Activated CD4-positive, alpha-beta T cell treated with anti-CD3 and anti-CD28 coated beads, Interleukin-2, amount 10 ng/mL, durations not matched to agents 24 days and 14 days (primary cell): ENCODE measurements at regions of chr16 and their contacts with region 1.

Region 1: DNA sequence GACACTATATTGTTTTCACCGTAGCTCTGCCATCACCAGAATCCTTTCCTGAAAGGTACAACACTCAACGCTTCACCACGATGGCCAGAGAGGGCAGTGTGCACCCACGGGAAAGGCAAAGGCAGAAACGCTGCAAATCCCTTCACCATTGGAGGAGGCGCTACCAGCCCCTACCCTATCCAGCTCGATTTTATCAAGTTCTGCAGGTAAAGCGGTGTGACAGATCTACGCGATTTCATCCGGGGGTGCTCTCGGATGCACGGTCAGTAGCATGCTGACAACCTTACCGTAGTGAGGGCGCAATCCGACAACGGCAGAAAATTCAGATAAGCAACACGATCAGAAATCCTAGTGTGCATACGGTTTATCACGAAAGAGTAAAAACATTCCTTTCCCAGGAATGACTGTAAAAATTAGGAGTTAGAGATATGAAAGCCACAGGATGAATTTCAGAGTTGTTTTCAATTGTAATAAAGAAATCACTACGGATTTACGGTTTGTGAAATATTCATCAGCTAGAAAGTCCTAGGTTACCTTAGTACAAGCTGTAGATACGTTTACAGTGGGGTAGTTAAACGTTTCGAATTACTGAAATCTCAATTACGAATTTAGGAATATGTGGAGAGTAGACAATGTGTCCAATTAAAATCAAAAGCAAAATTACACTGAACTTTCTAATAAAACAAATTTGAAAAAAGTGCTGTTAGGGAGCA is 1.8 kb downstream of the NETO2 start:
- DNase-seq: peak; percentile 96
- H3K4me3 Mint-ChIP-seq: peak overlapping the region; percentile 84
- H3K27ac Mint-ChIP-seq: peak overlapping the region; percentile 51
- H3K4me1 Mint-ChIP-seq: peaks cover 34% of the 10 kb centered on the region
- H3K27me3 Mint-ChIP-seq: peaks cover 18% of the 10 kb centered on the region

Region 2: GRCh38 chr16:46947900-46948547 is 193.9 kb before region 1 on chr16:
- intact Hi-C with region 1: loop called (anchors 2 kb)
- DNase-seq: peak; percentile 82
- H3K4me3 Mint-ChIP-seq: no peak overlapping the region
- H3K27ac Mint-ChIP-seq: no peak overlapping the region
- H3K4me1 Mint-ChIP-seq: peaks cover 11% of the 10 kb centered on the region
- H3K27me3 Mint-ChIP-seq: no peaks in the 10 kb centered on the region

Region 3: DNA sequence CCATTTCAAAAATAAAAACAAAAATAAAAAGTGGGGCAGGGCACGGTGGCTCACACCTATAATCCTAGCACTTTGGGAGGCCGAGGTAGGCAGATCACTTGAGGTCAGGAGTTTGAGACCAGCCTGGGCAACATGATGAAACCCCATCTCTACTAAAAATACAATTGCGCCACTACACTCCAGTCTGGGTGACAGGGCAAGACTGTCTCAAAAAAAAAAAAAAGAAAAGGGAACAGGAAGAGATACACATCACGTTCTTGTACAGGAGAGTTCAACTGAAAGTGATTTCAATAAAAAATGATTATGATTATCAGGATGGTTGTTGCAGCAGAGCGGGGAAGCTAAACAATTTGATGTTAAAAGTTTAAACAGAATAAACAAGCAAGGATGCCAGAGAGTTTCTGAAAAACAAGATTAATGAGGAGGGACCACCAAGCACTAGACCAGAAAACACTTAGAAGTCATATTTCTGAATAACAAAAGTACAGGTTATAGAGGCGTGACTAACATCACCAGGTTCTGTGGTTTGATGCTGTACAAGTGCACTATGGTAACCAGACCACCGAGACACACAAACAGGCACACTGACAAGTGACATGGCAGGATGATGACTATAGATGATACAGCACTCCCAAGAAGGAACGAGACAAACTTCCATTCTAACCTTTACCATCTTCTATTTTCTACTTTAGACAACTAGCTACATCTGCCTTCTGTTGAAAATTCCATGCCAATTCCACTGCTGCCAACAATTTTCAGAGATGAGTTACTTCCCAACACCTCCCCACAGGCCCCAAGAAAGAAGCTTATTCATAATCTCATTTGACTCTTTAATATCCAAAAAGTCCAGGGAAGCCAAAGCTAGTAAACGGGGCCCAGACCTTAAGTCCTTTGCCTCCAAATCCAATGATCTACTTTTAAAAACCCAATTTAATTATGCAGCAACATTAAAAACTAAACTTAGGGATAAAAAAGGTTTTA is 180.3 kb before region 1 on chr16:
- intact Hi-C with region 1: no loop called
- DNase-seq: no peak
- H3K4me3 Mint-ChIP-seq: no peak overlapping the region
- H3K27ac Mint-ChIP-seq: peak overlapping the region; percentile 73
- H3K4me1 Mint-ChIP-seq: peaks cover 18% of the 10 kb centered on the region
- H3K27me3 Mint-ChIP-seq: no peaks in the 10 kb centered on the region

Region 4: GRCh38 chr16:47028767-47029377 is 113.1 kb before region 1 on chr16:
- intact Hi-C with region 1: no loop called
- DNase-seq: no peak
- H3K4me3 Mint-ChIP-seq: no peak overlapping the region
- H3K27ac Mint-ChIP-seq: no peak overlapping the region
- H3K4me1 Mint-ChIP-seq: no peaks in the 10 kb centered on the region
- H3K27me3 Mint-ChIP-seq: no peaks in the 10 kb centered on the region

Region 5: GRCh38 chr16:47084198-47084597 is 57.7 kb before region 1 on chr16:
- intact Hi-C with region 1: no loop called
- DNase-seq: no peak
- H3K4me3 Mint-ChIP-seq: no peak overlapping the region
- H3K27ac Mint-ChIP-seq: no peak overlapping the region
- H3K4me1 Mint-ChIP-seq: no peaks in the 10 kb centered on the region
- H3K27me3 Mint-ChIP-seq: no peaks in the 10 kb centered on the region

Region 6: DNA sequence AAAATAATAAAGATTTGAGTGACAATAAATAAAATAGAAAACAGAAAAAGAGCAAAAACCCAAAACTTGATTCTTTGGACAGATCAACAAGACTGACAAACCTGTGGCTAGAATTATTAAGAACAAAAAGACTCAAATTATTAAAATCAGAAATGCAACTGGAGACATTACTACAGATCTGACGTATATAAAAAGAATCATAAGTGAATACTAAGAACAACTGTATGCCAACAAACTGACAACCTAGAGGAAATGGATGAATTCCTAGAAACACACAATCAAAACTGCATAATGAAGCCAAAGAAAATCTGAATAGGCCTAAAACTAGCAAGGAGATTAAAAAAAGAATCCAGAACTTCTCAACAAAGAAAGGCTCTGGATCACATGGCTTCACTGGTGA is 45.6 kb before region 1 on chr16:
- intact Hi-C with region 1: no loop called
- DNase-seq: no peak
- H3K4me3 Mint-ChIP-seq: no peak overlapping the region
- H3K27ac Mint-ChIP-seq: no peak overlapping the region
- H3K4me1 Mint-ChIP-seq: peaks cover 4% of the 10 kb centered on the region
- H3K27me3 Mint-ChIP-seq: no peaks in the 10 kb centered on the region

Region 7: GRCh38 chr16:47110939-47111338 is 31.0 kb before region 1 on chr16:
- intact Hi-C with region 1: loop called (anchors 1 kb)
- DNase-seq: no peak
- H3K4me3 Mint-ChIP-seq: no peak overlapping the region
- H3K27ac Mint-ChIP-seq: no peak overlapping the region
- H3K4me1 Mint-ChIP-seq: peaks cover 10% of the 10 kb centered on the region
- H3K27me3 Mint-ChIP-seq: no peaks in the 10 kb centered on the region

Region 8: GRCh38 chr16:47732523-47733111 is 590.7 kb after region 1 on chr16:
- intact Hi-C with region 1: loop called (anchors 5 kb)
- DNase-seq: peak; percentile 74
- H3K4me3 Mint-ChIP-seq: peak overlapping the region; percentile 4
- H3K27ac Mint-ChIP-seq: peak overlapping the region; percentile 88
- H3K4me1 Mint-ChIP-seq: peaks cover 23% of the 10 kb centered on the region
- H3K27me3 Mint-ChIP-seq: peaks cover 2% of the 10 kb centered on the region

Region 9: GRCh38 chr16:48117217-48118105 is 975.5 kb after region 1 on chr16:
- intact Hi-C with region 1: loop called (anchors 2 kb)
- DNase-seq: peak; percentile 85
- H3K4me3 Mint-ChIP-seq: no peak overlapping the region
- H3K27ac Mint-ChIP-seq: no peak overlapping the region
- H3K4me1 Mint-ChIP-seq: peaks cover 6% of the 10 kb centered on the region
- H3K27me3 Mint-ChIP-seq: no peaks in the 10 kb centered on the region

Region 10: DNA sequence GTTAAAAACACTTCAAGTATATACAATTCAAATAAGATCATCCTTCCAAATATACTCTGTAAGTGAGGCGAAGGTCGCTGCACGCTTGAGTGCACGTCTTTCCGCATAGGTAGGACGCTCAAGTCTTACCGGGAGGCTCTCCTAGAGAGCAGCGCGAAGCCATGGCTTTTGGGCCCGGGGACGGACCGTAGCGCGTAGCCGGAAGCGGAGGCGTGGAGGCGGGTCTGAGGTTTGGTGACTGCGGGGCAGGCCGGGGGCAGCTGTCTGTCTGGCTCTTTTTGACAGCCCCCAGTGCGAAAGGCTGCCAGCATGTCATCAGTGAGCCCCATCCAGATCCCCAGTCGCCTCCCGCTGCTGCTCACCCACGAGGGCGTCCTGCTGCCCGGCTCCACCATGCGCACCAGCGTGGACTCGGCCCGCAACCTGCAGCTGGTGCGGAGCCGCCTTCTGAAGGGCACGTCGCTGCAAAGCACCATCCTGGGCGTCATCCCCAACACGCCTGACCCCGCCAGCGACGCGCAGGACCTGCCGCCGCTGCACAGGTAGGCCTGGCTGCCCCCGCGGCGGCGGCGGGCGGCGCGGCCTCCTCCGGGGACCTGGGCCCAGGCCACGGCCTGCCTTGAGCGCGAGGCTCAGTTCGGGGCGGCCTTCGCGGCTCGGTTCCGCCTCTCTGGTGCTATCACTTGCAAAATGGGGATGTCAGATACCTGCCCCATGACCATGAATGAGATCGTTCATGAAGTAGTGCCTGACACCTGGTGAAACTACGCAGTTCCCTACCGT is 1102.3 kb after region 1 on chr16 and contains the start of gene LONP2:
- intact Hi-C with region 1: loop called (anchors 10 kb)
- DNase-seq: peak; percentile 98
- H3K4me3 Mint-ChIP-seq: peak within 1 kb of the TSS; percentile 90
- H3K27ac Mint-ChIP-seq: peak within 1 kb of the TSS; percentile 91
- H3K4me1 Mint-ChIP-seq: peaks cover 16% of the 10 kb centered on the region
- H3K27me3 Mint-ChIP-seq: peaks cover 2% of the 10 kb centered on the region
- total RNA-seq, gene LONP2: 57.3 and 58.9 TPM in 2 replicates